ENCODE measurements at regions of chr3 and their contacts with region 1.

Region 1: GRCh38 chr3:66165660-66166059 is 55.1 kb upstream of the SLC25A26 start:
- DNase-seq: no peak
- ATAC-seq: no peak
- H3K4me3 Mint-ChIP-seq: no peak overlapping the region
- H3K27ac Mint-ChIP-seq: no peak overlapping the region
- H3K4me1 Mint-ChIP-seq: no peaks in the 10 kb centered on the region
- H3K27me3 Mint-ChIP-seq: no peaks in the 10 kb centered on the region

Region 2: GRCh38 chr3:66053550-66054094 is 112.0 kb before region 1 on chr3:
- POLR2A ChIA-PET with region 1: interaction called, 11 read pairs
- DNase-seq: no peak
- ATAC-seq: no peak
- H3K4me3 Mint-ChIP-seq: no peak overlapping the region
- H3K27ac Mint-ChIP-seq: no peak overlapping the region
- H3K4me1 Mint-ChIP-seq: no peaks in the 10 kb centered on the region
- H3K27me3 Mint-ChIP-seq: no peaks in the 10 kb centered on the region

Measured in activated naive CD8-positive, alpha-beta T cell treated with anti-CD3 and anti-CD28 coated beads, Interleukin-2, amount 10 ng/mL, durations not matched to agents 7 days and 5 days (primary cell).